ENCODE measurements at regions of chr6 and their contacts with region 1.

Region 1: GRCh38 chr6:112780498-112781096 is 433.5 kb downstream of the RFPL4B start:
- DNase-seq: peak; percentile 84
- ATAC-seq: peak; percentile 88
- H3K4me3 ChIP-seq: no peak overlapping the region
- H3K27ac ChIP-seq: no peak overlapping the region
- H3K4me1 ChIP-seq: peaks cover 2% of the 10 kb centered on the region; the same call in 1 of the 2 replicates
- H3K27me3 ChIP-seq: no peaks in the 10 kb centered on the region
- CTCF ChIP-seq: peak; percentile 88
- POLR2A ChIP-seq: no peak
- RAD21 ChIP-seq: peak; percentile 92

Region 2: DNA sequence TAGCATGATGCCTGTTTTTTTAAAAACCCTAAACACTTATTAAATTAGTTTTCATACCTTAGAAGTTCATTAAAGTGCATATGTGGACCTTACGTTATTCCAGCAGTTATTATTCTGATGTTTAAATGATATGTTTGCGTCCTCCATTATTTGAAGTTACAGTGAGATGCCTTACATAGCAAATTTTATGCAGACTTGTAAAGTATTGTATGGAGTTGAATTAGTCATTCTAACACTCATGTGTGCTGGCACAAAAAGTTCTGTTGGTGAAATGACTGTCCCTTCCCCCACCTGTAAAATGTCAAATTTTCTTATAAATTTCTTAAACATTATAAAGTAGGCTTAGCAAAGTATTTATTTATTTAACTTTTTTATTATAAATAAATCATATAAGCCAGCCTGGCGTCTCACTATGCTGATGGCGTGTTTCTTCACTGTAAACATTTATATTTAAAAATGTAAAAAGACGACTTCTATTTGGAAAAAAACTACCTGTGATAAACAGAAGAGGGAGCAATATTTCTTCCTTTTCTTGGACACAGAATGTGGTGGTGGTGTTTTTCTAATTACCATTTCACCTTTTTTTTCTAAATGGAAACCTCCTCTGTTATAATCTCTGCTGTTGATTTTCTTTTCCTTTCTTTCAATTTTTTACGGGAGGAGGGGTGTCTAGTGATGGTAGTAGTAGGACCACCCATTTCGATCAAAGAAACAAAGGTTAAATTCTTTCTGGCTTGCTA is 278.1 kb before region 1 on chr6:
- CTCF ChIA-PET with region 1: no interaction called
- POLR2A ChIA-PET with region 1: no interaction called
- dilution Hi-C with region 1: no loop called
- in situ Hi-C with region 1: no loop called
- intact Hi-C with region 1: loop called (anchors 5 kb)
- DNase-seq: peak; percentile 41
- ATAC-seq: peak; percentile 79
- H3K4me3 ChIP-seq: no peak overlapping the region
- H3K27ac ChIP-seq: no peak overlapping the region
- H3K4me1 ChIP-seq: peaks cover 9% of the 10 kb centered on the region
- H3K27me3 ChIP-seq: no peaks in the 10 kb centered on the region
- CTCF ChIP-seq: peak; percentile 47
- POLR2A ChIP-seq: no peak
- RAD21 ChIP-seq: peak; percentile 33; the same call in 1 of the 2 replicates

Region 3: DNA sequence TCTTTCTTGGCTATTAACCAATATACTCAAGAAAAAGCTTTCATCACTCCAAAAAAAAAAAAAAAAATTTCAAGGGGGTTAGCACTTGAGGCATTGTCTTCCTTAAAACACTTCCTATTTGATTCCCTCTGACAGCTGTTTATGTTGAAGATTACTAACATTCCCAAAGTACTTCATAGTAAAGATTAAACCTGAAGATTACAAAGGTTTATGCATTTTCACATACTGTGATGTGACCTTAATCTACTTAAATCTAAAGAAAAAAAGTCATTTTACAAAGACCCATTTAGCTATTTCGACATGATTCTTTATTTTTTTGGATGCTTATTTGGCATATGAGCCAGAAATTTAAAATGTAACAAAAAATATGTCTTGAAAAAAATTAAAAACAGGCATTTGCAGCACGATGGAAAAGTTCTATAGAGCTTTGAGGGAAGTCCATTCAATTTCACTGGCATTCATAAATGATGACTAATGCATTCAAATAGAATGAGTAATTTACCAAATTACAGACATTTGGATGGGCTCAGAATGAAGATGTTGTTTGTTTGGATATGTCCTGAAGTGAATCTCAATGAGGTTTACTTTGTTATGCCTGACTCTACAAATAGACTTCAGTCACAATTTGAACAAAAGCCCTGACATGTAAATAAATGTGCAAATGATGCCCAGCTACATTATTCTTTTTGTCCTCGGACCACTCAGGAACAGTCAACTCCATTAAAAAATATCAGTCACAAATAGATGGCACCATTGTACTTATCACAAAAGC is 402.0 kb after region 1 on chr6:
- CTCF ChIA-PET with region 1: no interaction called
- POLR2A ChIA-PET with region 1: no interaction called
- dilution Hi-C with region 1: no loop called
- in situ Hi-C with region 1: no loop called
- intact Hi-C with region 1: loop called (anchors 5 kb)
- DNase-seq: peak; percentile 83
- ATAC-seq: peak; percentile 47
- H3K4me3 ChIP-seq: no peak overlapping the region
- H3K27ac ChIP-seq: no peak overlapping the region; the same call in 1 of the 2 replicates
- H3K4me1 ChIP-seq: peaks cover 13% of the 10 kb centered on the region
- H3K27me3 ChIP-seq: no peaks in the 10 kb centered on the region
- CTCF ChIP-seq: no peak
- POLR2A ChIP-seq: no peak
- RAD21 ChIP-seq: no peak

Region 4: GRCh38 chr6:113414511-113414910 is 633.9 kb after region 1 on chr6:
- CTCF ChIA-PET with region 1: no interaction called
- POLR2A ChIA-PET with region 1: no interaction called
- dilution Hi-C with region 1: no loop called
- in situ Hi-C with region 1: no loop called
- intact Hi-C with region 1: loop called (anchors 10 kb)
- DNase-seq: peak; percentile 81
- ATAC-seq: peak; percentile 93
- H3K4me3 ChIP-seq: no peak overlapping the region
- H3K27ac ChIP-seq: no peak overlapping the region
- H3K4me1 ChIP-seq: peaks cover 4% of the 10 kb centered on the region; the same call in 1 of the 2 replicates
- H3K27me3 ChIP-seq: no peaks in the 10 kb centered on the region
- CTCF ChIP-seq: peak; percentile 68
- POLR2A ChIP-seq: no peak
- RAD21 ChIP-seq: peak; percentile 83

Region 5: DNA sequence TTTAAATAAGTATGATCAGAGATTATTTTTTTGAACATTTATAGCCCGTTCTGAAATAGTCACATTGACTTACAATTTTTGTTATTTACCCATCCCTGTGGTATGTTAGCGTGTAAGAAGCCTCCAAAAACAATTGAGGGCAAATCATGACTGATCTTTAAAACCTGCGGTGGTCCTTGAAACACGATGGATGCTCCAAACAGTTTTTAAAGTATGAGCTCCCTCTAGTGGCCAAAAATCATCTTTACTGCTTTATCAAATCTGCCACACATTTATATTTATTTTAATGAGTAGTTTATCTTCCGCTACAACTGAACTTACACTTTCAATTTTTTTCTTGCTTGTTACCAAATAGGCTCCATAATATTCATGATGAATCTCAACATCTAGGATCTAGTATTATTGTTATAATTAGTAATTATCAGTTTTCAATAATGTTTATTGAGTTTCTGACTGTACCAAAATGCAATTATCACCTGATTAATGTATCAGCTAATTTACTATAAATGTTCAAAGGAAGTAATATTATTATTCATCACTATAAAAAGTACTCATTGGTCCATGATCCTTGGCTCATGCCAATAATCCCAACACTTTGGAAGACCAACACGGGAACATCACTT is 1128.7 kb after region 1 on chr6:
- CTCF ChIA-PET with region 1: interaction called, 3 read pairs
- POLR2A ChIA-PET with region 1: no interaction called
- dilution Hi-C with region 1: no loop called
- in situ Hi-C with region 1: loop called (anchors 10 kb)
- intact Hi-C with region 1: loop called (anchors 1 kb)
- DNase-seq: peak; percentile 79
- ATAC-seq: peak; percentile 59
- H3K4me3 ChIP-seq: no peak overlapping the region
- H3K27ac ChIP-seq: no peak overlapping the region
- H3K4me1 ChIP-seq: peaks cover 2% of the 10 kb centered on the region
- H3K27me3 ChIP-seq: no peaks in the 10 kb centered on the region
- CTCF ChIP-seq: peak; percentile 76
- POLR2A ChIP-seq: no peak
- RAD21 ChIP-seq: peak; percentile 83